PC-9 (cell line): ENCODE measurements at regions of chr3 and their contacts with region 1.

Region 1: GRCh38 chr3:58059349-58060321 is 51.4 kb downstream of the FLNB start:
- DNase-seq: no peak
- H3K4me3 ChIP-seq: no peak overlapping the region
- H3K27ac ChIP-seq: peak overlapping the region; percentile 47
- H3K4me1 ChIP-seq: peaks cover 39% of the 10 kb centered on the region
- H3K27me3 ChIP-seq: no peaks in the 10 kb centered on the region
- CTCF ChIP-seq: no peak

Region 2: DNA sequence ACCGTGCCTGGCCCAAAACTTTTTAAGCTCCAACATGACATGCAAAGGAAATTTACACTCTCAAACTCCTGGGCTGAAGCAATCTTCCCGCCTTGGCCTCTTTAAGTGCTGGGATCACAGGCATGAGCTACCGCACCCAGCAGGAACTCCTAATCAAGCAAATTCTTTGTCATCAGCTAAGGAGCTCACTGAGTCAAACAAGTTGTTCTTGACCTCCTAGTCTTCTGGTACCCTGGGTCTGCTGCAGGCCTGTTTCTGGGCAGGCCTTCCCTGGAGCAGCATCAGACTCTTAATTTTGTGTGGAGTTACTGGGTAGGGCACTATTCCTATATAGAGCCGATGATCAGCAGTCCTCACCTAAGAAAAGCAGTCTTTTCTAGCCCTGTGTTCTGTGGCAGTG is 119.9 kb before region 1 on chr3:
- CTCF ChIA-PET with region 1: no interaction called
- POLR2A ChIA-PET with region 1: no interaction called
- intact Hi-C with region 1: no loop called
- DNase-seq: no peak
- H3K4me3 ChIP-seq: no peak overlapping the region
- H3K27ac ChIP-seq: no peak overlapping the region
- H3K4me1 ChIP-seq: 0 out of 2 replicates have a peak, but pooled peaks cover 5% of the 10 kb centered on the region
- H3K27me3 ChIP-seq: no peaks in the 10 kb centered on the region
- CTCF ChIP-seq: no peak

Region 3: GRCh38 chr3:58111513-58112186 is 52.0 kb after region 1 on chr3:
- CTCF ChIA-PET with region 1: no interaction called
- POLR2A ChIA-PET with region 1: no interaction called
- intact Hi-C with region 1: loop called (anchors 2 kb)
- DNase-seq: peak; percentile 79 to 84
- H3K4me3 ChIP-seq: no peak overlapping the region
- H3K27ac ChIP-seq: peak overlapping the region; percentile 68
- H3K4me1 ChIP-seq: peaks cover 20% of the 10 kb centered on the region
- H3K27me3 ChIP-seq: no peaks in the 10 kb centered on the region
- CTCF ChIP-seq: no peak

Region 4: DNA sequence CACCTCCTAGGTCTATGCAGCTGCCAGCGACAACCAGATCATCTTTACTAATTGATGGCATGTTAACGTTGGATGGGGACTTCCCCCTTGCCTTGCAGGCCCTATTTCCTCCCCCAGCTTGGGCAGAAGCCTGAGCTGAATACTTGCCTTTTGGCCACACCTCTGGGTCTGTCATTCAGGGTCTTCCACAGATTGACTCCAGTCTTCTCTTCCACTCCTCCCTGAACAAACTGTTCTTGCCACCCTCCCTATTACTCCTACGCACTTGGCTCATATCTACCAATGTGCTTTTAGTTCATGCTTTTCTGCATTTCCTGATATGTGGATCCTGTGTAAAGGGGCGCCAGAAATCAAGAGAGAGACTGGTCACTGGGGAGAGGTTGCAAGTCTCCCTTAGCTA is 77.7 kb after region 1 on chr3:
- CTCF ChIA-PET with region 1: interaction called, 4 read pairs
- POLR2A ChIA-PET with region 1: interaction called, 31 read pairs
- intact Hi-C with region 1: no loop called
- DNase-seq: no peak
- H3K4me3 ChIP-seq: no peak overlapping the region
- H3K27ac ChIP-seq: no peak overlapping the region
- H3K4me1 ChIP-seq: no peaks in the 10 kb centered on the region
- H3K27me3 ChIP-seq: no peaks in the 10 kb centered on the region
- CTCF ChIP-seq: no peak

Region 5: DNA sequence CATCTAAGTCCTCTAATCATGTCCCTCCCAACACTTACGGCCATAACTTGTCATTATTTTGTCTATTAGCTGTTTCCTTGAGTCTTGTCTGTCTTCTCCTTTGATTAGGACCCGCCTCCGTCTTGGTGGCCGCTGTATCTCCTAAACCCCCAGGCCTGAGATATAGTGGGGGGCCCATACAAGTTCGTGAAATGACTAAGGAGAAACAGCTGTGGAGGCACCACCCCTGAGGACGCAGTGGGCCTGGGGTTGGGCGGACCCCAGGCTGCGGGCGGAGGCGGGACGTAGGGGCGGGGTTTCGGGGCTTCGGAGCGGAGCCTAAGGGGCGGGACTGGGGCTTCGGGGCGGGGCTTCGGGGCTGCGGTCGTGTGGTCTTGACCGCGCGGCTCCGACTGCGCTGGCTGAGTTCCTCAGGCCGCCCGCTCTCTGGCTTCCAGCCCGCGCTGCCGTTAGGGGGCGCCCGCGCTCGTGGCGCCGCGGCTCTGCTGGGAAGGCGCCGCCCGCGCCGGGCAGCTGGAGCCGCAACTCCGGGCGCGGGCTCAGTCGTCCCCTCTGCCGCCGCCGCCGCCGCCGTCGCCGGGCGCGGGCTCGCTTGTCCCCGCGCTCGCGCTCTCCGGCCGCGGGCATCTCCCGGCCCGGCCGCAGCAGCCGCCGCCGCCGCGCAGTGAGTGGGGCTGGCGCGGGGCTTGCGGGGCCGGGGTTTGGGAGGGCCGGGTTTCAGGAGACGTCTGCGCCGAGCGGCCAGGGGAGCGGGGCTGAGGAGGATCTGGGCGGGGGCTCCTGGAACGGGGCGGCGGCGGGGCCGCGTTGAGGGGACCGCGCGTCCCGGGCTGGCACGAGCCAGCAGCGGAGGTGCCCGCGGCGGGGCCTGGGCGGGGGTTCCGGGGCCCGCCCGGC is 432.1 kb after region 1 on chr3 and contains the start of gene KCTD6:
- CTCF ChIA-PET with region 1: no interaction called
- POLR2A ChIA-PET with region 1: no interaction called
- intact Hi-C with region 1: no loop called
- DNase-seq: peak; percentile 82 to 96
- H3K4me3 ChIP-seq: peak within 1 kb of the TSS; percentile 96
- H3K27ac ChIP-seq: peak within 1 kb of the TSS; percentile 1; the same call in 1 of the 2 replicates
- H3K4me1 ChIP-seq: peaks cover 58% of the 10 kb centered on the region
- H3K27me3 ChIP-seq: no peaks in the 10 kb centered on the region
- CTCF ChIP-seq: peak; percentile 56
- total RNA-seq, gene KCTD6: 7.8 and 10.3 TPM in 2 replicates